WTC11 (cell line): ENCODE measurements at regions of chr17 and their contacts with region 1.

Region 1: GRCh38 chr17:45135192-45135977 is at the start of gene ACBD4:
- DNase-seq: peak; percentile 97
- ATAC-seq: peak; percentile 76
- H3K4me3 Mint-ChIP-seq: peak within 1 kb of the TSS; percentile 72
- H3K27ac Mint-ChIP-seq: no peak within 1 kb of the TSS
- H3K4me1 Mint-ChIP-seq: peaks cover 14% of the 10 kb centered on the region; the same call in 1 of the 2 replicates
- H3K27me3 Mint-ChIP-seq: no peaks in the 10 kb centered on the region; the same call in 1 of the 2 replicates
- CTCF ChIP-seq: peak; percentile 100
- total RNA-seq, gene ACBD4: 12.7 to 21.0 TPM (median 21.0 TPM) in 3 replicates

Region 2: DNA sequence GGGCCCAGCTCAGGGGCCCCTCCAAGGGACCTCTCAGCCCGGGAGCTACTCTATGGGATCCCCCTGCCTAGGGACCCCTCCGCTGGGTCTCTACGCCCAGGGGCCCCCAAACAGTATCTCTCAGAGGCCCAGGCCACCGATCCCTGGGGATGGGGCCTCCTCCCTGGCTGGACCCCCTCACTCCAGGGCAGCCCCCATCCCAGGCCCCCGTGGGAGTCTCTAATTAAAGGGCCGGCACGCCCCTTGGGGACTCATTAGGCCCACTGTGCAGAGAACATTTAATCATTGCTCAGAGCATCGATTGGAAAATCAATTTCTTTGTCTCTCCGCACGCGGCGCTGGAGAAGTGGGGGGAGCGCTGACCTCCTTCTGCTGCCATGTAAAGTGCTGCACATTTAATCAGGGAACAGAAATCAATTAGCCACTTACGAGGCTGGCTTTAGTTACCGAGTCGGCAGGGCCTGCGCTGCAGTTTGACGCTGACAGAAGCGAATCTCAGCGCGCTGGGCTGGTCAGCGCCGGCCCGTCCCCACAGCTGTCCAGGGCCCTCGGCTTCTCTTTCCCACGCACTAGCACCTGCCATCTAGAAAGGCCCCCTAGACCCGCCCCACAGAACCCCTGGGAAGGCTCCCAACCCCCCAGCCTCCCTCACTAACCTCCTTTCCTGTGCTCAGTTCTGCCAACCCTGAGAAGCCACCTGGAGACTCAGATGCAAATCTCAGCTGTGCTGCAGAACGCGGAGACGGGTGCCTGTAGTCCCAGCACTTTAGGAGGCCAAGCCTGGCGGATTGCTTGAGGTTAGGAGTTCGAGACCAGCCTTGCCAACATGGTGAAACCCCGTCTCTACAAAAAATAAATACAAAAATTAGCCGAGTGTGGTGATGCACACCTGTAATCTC is 147.1 kb before region 1 on chr17:
- CTCF ChIA-PET with region 1: interaction called, 17 read pairs
- POLR2A ChIA-PET with region 1: no interaction called
- DNase-seq: peak; percentile 33
- ATAC-seq: peak; percentile 4
- H3K4me3 Mint-ChIP-seq: peak overlapping the region; percentile 67
- H3K27ac Mint-ChIP-seq: peak overlapping the region; percentile 79
- H3K4me1 Mint-ChIP-seq: peaks cover 34% of the 10 kb centered on the region
- H3K27me3 Mint-ChIP-seq: peaks cover 9% of the 10 kb centered on the region
- CTCF ChIP-seq: no peak

Region 3: DNA sequence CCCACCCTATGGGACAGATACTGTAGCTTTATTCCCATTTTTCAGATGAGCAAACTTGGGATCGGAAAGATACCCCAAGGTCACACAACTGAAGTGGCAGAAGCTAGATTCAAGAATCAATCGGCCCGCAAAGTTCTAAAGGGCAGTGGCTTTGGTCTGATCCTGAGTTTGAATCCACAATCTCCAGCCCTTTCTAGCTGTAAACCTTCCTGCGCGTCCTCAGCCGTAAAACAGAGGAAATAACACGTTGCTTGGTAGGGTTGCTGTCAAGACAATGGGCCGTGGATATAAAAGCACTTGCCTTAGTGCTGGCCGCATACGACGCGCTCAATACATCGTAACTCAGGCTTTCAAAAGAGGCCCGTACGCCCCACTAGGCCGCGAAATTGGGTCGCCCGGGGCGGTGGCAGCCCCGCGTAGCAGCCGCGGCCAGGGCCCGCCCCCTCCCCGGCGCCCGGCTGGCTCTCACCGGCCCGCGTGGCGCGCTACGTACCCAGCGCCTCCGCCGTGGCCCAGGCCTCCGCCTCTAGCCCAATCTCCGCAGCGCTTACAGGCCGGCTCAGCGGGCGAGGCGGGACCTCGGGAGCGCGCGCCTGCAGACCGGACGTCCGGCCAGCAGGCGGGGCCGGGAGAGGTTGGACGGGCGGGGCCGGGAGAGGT is 84.2 kb before region 1 on chr17 and contains the start of gene DCAKD:
- CTCF ChIA-PET with region 1: interaction called, 16 read pairs
- POLR2A ChIA-PET with region 1: no interaction called
- DNase-seq: peak; percentile 91
- ATAC-seq: peak; percentile 99
- H3K4me3 Mint-ChIP-seq: peak within 1 kb of the TSS; percentile 92
- H3K27ac Mint-ChIP-seq: peak within 1 kb of the TSS; percentile 97
- H3K4me1 Mint-ChIP-seq: peaks cover 25% of the 10 kb centered on the region
- H3K27me3 Mint-ChIP-seq: no peaks in the 10 kb centered on the region
- CTCF ChIP-seq: no peak
- total RNA-seq, gene DCAKD: 57.7 to 59.2 TPM (median 58.7 TPM) in 3 replicates

Region 4: DNA sequence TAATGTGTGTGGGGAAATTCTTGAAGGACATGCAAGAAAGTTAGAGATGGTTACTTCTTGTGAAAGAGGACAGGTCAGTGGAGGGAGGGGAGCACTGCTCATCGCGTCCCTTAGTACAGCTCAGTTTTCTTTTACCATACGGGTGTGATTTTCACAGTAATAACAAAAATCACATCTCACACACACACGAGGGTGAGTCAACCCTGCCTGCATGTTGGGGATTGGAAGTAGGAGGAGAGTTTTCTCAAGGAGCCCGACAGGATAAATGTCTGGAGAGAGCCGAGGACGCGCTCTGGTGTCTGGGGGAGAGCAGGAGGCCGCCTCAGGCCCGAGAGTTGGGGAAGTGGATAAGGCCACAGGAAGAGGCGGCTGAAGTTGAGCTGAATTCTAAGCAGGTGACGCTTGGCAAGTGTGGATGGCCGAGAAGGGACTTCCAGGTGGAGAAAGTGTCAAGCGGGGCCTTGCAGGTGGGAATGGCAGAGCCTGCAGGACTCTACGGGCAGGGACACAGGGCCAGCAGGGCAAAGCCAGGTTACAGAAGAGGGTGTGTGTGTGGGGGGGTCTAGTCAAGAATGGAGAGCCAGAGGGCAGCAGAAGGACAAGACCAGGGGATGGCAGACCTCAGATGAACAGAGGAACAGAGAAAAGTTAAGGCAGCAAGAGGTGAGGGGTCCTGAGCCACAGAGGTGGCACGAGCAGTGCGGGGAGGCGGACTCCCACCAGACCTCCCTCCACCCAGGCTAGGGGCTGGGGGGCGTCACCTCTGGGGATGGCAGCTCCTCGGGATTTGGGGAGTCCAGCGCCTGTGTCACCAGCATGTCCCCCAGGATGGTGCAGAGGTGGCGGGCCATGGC is 19.3 kb before region 1 on chr17:
- CTCF ChIA-PET with region 1: interaction called, 27 read pairs
- POLR2A ChIA-PET with region 1: no interaction called
- DNase-seq: no peak
- ATAC-seq: no peak
- H3K4me3 Mint-ChIP-seq: no peak overlapping the region
- H3K27ac Mint-ChIP-seq: peak overlapping the region; percentile 66; the same call in 1 of the 2 replicates
- H3K4me1 Mint-ChIP-seq: peaks cover 14% of the 10 kb centered on the region
- H3K27me3 Mint-ChIP-seq: no peaks in the 10 kb centered on the region
- CTCF ChIP-seq: no peak

Region 5: DNA sequence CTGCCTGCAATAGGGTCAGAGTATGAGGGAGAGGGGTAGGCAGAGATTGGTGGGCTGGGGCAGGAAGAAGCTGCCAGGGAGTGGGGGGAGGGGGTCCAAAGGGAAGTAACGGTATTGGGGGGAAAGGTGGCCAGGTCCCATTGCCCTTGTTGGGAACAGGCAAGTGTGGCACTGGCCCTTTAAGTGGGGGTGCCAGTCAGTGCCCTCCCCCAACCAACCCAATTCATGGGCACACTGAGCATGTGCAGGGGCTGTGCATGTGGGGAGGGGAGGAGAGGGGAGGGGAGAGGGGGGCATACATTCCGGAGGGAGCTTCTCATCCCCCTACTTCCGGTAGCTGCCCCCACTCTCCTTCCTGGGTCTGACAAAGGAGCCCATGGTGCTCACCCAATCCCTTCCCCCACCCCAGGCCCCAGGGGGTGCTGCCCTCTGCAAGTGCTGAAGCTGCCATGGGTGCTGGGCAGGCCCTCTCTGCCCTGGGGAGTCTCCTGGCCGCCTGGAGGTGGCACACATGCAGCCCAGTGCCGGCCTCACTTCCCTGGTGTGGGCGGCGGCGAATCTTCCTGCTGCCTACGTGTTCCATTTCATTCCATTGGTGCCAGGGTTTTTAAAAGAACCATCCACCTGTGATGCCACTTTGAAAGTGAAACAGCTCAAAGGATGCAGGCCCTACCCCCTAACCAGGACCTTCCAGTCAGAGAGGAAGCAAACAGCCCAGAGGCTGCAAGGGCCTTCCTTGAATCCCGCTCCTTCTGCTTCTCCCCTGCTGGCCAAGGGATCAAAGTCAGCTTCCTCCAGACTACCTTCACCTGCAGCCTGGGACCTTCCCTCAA is 37.3 kb after region 1 on chr17:
- CTCF ChIA-PET with region 1: interaction called, 81 read pairs
- POLR2A ChIA-PET with region 1: interaction called, 9 read pairs
- DNase-seq: peak; percentile 38
- ATAC-seq: peak; percentile 20
- H3K4me3 Mint-ChIP-seq: peak overlapping the region; percentile 5; the same call in 1 of the 2 replicates
- H3K27ac Mint-ChIP-seq: peak overlapping the region; percentile 98
- H3K4me1 Mint-ChIP-seq: peaks cover 29% of the 10 kb centered on the region
- H3K27me3 Mint-ChIP-seq: no peaks in the 10 kb centered on the region
- CTCF ChIP-seq: no peak

Region 6: DNA sequence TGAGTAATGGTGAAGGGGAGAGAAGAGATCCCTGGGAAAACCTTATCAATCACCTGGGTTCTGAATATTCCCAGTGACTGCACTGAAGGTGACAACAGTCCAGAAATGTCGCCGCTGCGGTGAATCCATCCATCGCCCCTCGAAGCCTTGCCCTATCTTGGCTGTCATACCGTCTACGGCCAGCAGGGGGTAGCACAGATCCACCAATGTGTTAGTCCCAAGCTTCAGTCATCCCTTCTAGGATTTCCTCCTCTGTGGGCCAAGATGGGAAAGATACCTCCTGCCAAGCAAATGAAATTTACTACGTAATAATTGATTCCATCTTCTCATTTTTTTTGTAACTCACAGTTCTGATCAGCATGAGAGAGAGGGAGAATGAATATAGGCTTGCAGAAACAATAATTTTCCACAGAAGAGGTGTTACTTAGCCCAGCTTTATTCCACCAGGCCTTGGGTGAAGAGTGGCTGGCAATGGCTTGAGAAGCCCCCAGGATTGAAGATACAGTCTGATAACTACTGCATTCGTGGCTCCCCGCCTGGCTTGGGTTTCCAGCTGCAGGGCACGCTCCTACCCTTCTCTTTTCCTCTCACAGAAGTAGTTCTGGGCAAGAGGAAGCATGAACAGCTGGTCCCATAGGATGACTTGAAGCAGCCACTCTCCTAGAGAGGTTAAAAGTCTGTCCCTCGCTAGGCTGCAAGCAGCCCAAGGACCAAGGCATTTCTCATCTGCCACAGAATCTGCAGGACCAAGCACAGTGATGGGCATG is 83.7 kb after region 1 on chr17:
- CTCF ChIA-PET with region 1: interaction called, 33 read pairs
- POLR2A ChIA-PET with region 1: no interaction called
- DNase-seq: peak; percentile 95
- ATAC-seq: peak; percentile 54
- H3K4me3 Mint-ChIP-seq: peak overlapping the region; percentile 38
- H3K27ac Mint-ChIP-seq: no peak overlapping the region
- H3K4me1 Mint-ChIP-seq: peaks cover 7% of the 10 kb centered on the region; the same call in 1 of the 2 replicates
- H3K27me3 Mint-ChIP-seq: peaks cover 60% of the 10 kb centered on the region
- CTCF ChIP-seq: peak; percentile 98

Region 7: DNA sequence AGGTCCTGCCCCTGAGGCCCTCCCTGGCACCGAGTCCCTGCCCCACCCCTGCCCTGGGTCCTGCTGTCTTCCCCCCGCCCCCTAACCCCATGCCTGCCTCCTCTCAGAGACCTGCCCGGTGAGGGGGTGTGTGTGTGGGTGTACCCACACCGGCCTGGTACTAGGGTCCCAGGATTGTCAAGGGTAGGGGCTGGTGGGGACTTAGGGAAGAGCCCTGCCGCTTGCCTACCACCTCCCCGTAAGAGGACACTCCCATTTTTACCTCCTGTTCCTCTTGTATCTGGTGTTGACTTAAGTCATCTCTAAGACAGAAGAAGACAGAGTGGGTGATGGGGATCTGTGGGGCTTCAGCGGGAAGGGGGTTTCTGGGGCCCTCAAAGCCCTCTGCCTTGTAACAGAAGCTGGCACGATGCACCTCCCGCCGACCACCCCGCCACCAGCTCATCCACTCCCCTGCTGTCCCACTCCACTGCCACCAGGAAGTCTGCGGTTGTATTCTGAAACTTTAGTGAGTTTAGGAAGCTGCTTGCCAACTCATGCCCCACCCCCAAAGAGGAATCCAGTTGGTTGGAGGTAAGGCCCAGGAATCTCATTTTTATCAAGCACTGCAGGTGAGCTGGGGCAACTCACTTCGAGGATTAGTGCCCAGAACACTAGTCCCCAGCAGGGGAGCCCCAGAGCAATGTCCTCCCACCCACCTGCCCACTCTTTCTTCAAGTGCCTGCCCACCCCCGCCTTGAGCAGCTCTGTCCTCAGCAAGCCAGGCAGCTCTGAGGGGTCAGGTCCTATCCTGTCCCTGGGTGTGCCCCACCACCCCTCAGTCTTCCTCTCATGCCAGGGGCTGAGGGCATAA is 121.0 kb after region 1 on chr17:
- CTCF ChIA-PET with region 1: interaction called, 12 read pairs
- POLR2A ChIA-PET with region 1: no interaction called
- DNase-seq: no peak
- ATAC-seq: peak; percentile 46
- H3K4me3 Mint-ChIP-seq: no peak overlapping the region
- H3K27ac Mint-ChIP-seq: no peak overlapping the region
- H3K4me1 Mint-ChIP-seq: peaks cover 18% of the 10 kb centered on the region
- H3K27me3 Mint-ChIP-seq: peaks cover 10% of the 10 kb centered on the region
- CTCF ChIP-seq: no peak